Mucosa of descending colon (tissue), 3 donors: ENCODE measurements at regions of chr17 and their contacts with region 1.

Region 1: GRCh38 chr17:42577532-42578281 is at the start of gene PSMC3IP:
- DNase-seq: peak; percentile 96 to 97 (median 97)
- ATAC-seq: peak; percentile 96
- H3K4me3 ChIP-seq: peak within 1 kb of the TSS; percentile 53
- H3K4me1 ChIP-seq: peaks cover 17% of the 10 kb centered on the region
- CTCF ChIP-seq: peak; percentile 41
- total RNA-seq, gene PSMC3IP: 1.9 to 6.4 (median 3.1) TPM

Region 2: GRCh38 chr17:42677008-42677857 is 99.5 kb after region 1 on chr17:
- intact Hi-C with region 1: loop called in 1 of 2 experiments (anchors 10 kb)
- DNase-seq: peak; percentile 100
- ATAC-seq: peak; percentile 79
- H3K4me3 ChIP-seq: peak overlapping the region; percentile 63
- H3K4me1 ChIP-seq: peaks cover 57% of the 10 kb centered on the region
- CTCF ChIP-seq: no peak